ENCODE measurements at regions of chrX and their contacts with region 1.

Region 1: GRCh38 chrX:91137883-91138282 is 296.8 kb upstream of the PABPC5 start:
- DNase-seq: no peak
- H3K4me3 ChIP-seq: no peak overlapping the region
- H3K4me3 Mint-ChIP-seq: no peak overlapping the region
- H3K27ac Mint-ChIP-seq: no peak overlapping the region
- H3K4me1 ChIP-seq: no peaks in the 10 kb centered on the region
- H3K4me1 Mint-ChIP-seq: no peaks in the 10 kb centered on the region
- H3K27me3 ChIP-seq: no peaks in the 10 kb centered on the region
- H3K27me3 Mint-ChIP-seq: no peaks in the 10 kb centered on the region
- CTCF ChIP-seq: no peak

Region 2: DNA sequence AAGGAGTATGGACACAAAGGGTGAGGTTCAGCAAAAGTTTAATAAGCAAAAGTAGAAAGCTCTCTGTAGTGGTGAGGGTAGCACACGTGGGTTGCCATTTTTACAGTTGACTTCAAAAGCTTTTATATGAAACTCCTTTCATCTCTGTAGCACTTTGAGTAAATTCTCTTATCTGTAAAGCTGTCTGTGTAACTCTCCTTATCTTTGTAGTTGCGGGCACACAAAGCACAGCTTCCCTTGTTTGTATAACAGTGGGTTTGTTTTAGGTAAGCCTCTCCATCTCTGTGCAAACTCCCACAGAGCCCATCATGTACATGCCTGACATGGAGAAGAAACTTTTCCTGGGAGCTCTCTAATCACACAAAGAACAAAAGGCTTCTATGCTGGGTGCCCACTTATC is 29.1 kb before region 1 on chrX:
- CTCF ChIA-PET with region 1: no interaction called
- POLR2A ChIA-PET with region 1: no interaction called
- intact Hi-C with region 1: loop called (anchors 1 kb)
- DNase-seq: peak; percentile 56 to 70
- H3K4me3 ChIP-seq: no peak overlapping the region
- H3K4me3 Mint-ChIP-seq: no peak overlapping the region
- H3K27ac Mint-ChIP-seq: no peak overlapping the region
- H3K4me1 ChIP-seq: 0 out of 2 replicates have a peak, but pooled peaks cover 8% of the 10 kb centered on the region
- H3K4me1 Mint-ChIP-seq: no peaks in the 10 kb centered on the region
- H3K27me3 ChIP-seq: no peaks in the 10 kb centered on the region
- H3K27me3 Mint-ChIP-seq: no peaks in the 10 kb centered on the region
- CTCF ChIP-seq: no peak

Region 3: GRCh38 chrX:91122141-91122694 is 15.7 kb before region 1 on chrX:
- CTCF ChIA-PET with region 1: no interaction called
- POLR2A ChIA-PET with region 1: no interaction called
- intact Hi-C with region 1: loop called (anchors 1 kb)
- DNase-seq: no peak
- H3K4me3 ChIP-seq: no peak overlapping the region
- H3K4me3 Mint-ChIP-seq: no peak overlapping the region
- H3K27ac Mint-ChIP-seq: no peak overlapping the region
- H3K4me1 ChIP-seq: no peaks in the 10 kb centered on the region
- H3K4me1 Mint-ChIP-seq: no peaks in the 10 kb centered on the region
- H3K27me3 ChIP-seq: no peaks in the 10 kb centered on the region
- H3K27me3 Mint-ChIP-seq: no peaks in the 10 kb centered on the region
- CTCF ChIP-seq: no peak

Measured in Caco-2 (cell line).